Tibial artery (tissue), 4 donors: ENCODE measurements at regions of chr14 and their contacts with region 1.

Region 1: GRCh38 chr14:58637391-58638230 is at the start of gene DACT1:
- DNase-seq: peak; percentile 57 to 81
- H3K4me3 ChIP-seq: peak within 1 kb of the TSS; percentile 95 to 98
- H3K27ac ChIP-seq: peak within 1 kb of the TSS; percentile 91 to 98
- H3K4me1 ChIP-seq: peaks cover 0 to 55% (median 22%) of the 10 kb centered on the region in 4 donors
- H3K27me3 ChIP-seq: no peaks in the 10 kb centered on the region
- CTCF ChIP-seq: peak in 1 of 2 experiments; percentile 16

Region 2: GRCh38 chr14:58362798-58363412 is 274.7 kb before region 1 on chr14:
- intact Hi-C with region 1: no loop called
- DNase-seq: no peak
- H3K4me3 ChIP-seq: no peak overlapping the region
- H3K27ac ChIP-seq: no peak overlapping the region
- H3K4me1 ChIP-seq: no peaks in the 10 kb centered on the region
- H3K27me3 ChIP-seq: no peaks in the 10 kb centered on the region
- CTCF ChIP-seq: no peak

Region 3: DNA sequence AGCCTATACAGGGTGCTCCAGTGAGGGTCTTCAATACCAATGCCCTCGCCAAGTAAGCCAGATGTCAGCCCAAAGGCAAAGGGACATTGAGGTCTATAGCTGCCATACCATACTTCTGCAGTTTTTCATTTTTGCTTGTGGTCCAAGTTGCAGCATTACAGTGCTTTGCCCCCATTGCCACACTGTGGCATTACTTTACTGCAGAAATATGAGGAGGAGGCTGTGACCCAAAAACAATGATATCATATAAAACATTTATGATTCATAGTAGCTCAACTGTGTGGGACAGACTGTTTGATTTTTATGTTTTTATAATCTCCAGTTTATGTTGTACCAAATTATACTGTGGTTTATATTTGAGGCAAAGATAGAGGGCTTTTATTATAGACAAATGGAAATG is 146.0 kb before region 1 on chr14:
- intact Hi-C with region 1: loop called (anchors 10 kb)
- DNase-seq: no peak
- H3K4me3 ChIP-seq: no peak overlapping the region
- H3K27ac ChIP-seq: no peak overlapping the region
- H3K4me1 ChIP-seq: no peaks in the 10 kb centered on the region
- H3K27me3 ChIP-seq: no peaks in the 10 kb centered on the region
- CTCF ChIP-seq: no peak

Region 4: GRCh38 chr14:59028476-59029202 is 391.0 kb after region 1 on chr14:
- intact Hi-C with region 1: loop called (anchors 10 kb)
- DNase-seq: peak in 1 of 2 donors; percentile 36
- H3K4me3 ChIP-seq: no peak overlapping the region
- H3K27ac ChIP-seq: no peak overlapping the region
- H3K4me1 ChIP-seq: peaks cover 0 to 5% (median 0%) of the 10 kb centered on the region in 4 donors
- H3K27me3 ChIP-seq: no peaks in the 10 kb centered on the region
- CTCF ChIP-seq: peak; percentile 68 to 83